Esophagus squamous epithelium (tissue), 5 donors: ENCODE measurements at regions of chr7 and their contacts with region 1.

Region 1: DNA sequence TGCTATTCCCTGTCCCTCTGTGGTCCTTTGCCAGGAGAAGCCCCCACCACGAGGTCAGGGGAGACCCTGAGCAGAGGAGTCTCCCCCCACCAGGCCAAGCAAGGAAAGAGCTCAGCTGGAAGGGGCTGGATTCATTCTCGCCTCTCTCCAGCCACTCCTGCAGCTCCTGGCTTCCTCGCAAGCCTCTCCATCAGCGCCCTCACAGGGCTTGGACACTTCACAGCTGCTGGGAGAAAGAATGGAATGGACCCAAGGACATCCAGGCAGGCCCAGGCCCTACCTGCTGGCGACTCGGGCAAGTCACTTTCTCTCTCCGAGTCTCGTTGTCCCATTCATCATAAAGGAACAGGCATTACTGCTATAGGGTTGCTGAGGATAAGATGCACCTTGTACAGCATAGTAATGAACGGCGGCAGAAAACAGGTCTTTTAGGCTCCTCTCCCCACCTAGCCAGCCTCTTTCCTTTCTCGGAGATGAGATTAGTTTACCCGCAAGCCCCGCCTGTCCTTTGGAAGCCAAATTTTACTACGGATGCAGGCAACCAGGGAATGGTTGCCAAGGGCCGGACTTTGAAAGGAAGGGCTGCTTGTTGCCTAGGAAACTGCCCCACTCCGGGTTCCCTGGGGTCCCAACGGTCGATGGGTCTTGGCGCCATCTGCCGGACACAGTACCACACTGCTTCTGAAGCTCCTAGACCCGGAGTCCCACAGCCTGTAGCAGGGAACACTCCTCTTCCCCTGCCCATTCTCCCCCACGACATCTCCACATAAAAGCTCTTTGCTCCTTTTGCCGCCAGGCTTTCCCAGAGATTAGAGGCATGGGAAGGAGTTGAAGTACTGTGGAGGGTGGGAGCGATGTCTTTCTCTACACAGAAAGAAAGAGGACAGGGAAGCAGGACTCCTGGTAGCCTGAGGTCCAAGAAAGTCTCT is 22.3 kb downstream of the IMPDH1 start:
- DNase-seq: no peak
- H3K4me3 ChIP-seq: no peak overlapping the region
- H3K27ac ChIP-seq: peak overlapping the region in 1 of 4 donors; percentile 9
- H3K4me1 ChIP-seq: peaks cover 0 to 40% (median 7%) of the 10 kb centered on the region in 3 donors
- H3K27me3 ChIP-seq: peaks cover 0 to 17% (median 0%) of the 10 kb centered on the region in 4 donors
- CTCF ChIP-seq: peak; percentile 80 to 89 (median 82)
- POLR2A ChIP-seq: no peak

Region 2: DNA sequence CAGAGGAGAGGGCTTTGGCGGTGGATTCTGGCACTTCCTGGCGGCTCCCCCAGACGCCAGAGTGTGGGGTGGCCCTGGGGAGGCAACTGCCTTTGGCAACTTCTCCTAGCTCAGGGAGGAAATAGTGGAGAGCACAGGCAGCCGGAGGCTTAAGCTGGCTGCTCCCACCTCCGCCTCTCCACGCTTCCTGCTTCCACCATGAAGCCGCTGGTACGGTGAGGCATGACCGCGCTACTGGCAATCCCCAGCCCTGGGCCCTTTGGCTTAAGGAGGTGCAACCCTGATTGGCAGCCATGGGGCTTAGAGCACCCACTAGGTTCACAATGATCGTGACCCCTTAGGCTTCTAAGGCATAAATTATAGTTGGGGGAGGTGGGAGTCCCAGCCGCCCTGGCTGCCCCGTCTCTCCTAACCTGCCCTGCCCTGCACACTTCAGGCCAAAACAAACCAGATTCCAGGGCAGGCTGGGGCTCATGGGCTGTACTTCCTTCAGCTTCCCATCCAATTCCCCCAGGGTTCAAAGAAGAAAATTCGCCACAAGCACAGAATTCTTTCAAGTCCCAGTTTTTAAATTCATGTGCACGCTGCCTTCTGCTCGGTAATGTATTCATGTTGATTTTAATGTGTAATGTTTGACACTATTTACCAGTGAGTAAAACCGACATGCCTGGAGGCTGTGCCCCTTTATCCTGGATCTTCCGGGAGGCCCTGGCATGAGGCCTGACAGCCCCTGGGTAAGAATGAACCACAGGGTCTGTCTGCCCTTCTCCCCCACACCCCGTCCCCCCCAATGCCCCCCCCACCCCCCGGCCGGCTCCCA is 265.6 kb before region 1 on chr7:
- intact Hi-C with region 1: no loop called
- DNase-seq: no peak
- H3K4me3 ChIP-seq: peak overlapping the region in 2 of 4 donors; percentile 15 to 54
- H3K27ac ChIP-seq: no peak overlapping the region
- H3K4me1 ChIP-seq: no peaks in the 10 kb centered on the region
- H3K27me3 ChIP-seq: peaks cover 0 to 41% (median 0%) of the 10 kb centered on the region in 4 donors
- CTCF ChIP-seq: no peak
- POLR2A ChIP-seq: no peak

Region 3: GRCh38 chr7:128347647-128348097 is 39.8 kb before region 1 on chr7:
- intact Hi-C with region 1: loop called (anchors 5 kb)
- DNase-seq: no peak
- H3K4me3 ChIP-seq: no peak overlapping the region
- H3K27ac ChIP-seq: no peak overlapping the region
- H3K4me1 ChIP-seq: peaks cover 10 to 48% (median 23%) of the 10 kb centered on the region in 3 donors
- H3K27me3 ChIP-seq: peaks cover 0 to 28% (median 2%) of the 10 kb centered on the region in 4 donors
- CTCF ChIP-seq: peak in 5 of 6 experiments; percentile 55 to 76 (median 65)
- POLR2A ChIP-seq: no peak

Region 4: DNA sequence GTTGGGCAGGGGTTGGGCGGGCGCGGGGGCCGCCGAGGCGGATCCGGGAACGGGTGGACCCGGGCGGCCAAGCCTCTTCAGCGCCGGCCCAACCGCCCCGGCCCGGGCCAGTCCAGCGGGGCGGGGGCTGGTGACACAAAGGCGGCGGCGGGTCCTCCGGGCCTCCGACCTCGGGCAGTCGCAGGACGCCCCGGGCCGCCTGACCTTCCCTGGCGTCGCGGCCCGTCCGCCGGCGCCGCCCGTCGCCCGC is 143.3 kb after region 1 on chr7:
- intact Hi-C with region 1: no loop called
- DNase-seq: no peak
- H3K4me3 ChIP-seq: peak overlapping the region; percentile 70 to 91 (median 80)
- H3K27ac ChIP-seq: peak overlapping the region; percentile 94 to 99 (median 97)
- H3K4me1 ChIP-seq: peaks cover 0 to 53% (median 30%) of the 10 kb centered on the region in 3 donors
- H3K27me3 ChIP-seq: no peaks in the 10 kb centered on the region
- CTCF ChIP-seq: no peak
- POLR2A ChIP-seq: no peak